ENCODE measurements at regions of chr6 and their contacts with region 1.

Region 1: GRCh38 chr6:118800394-118801071 is 93.4 kb upstream of the ASF1A start:
- DNase-seq: peak; percentile 87
- H3K4me3 Mint-ChIP-seq: peak overlapping the region; percentile 14
- H3K27ac Mint-ChIP-seq: peak overlapping the region; percentile 77
- H3K4me1 Mint-ChIP-seq: peaks cover 44% of the 10 kb centered on the region
- H3K27me3 Mint-ChIP-seq: no peaks in the 10 kb centered on the region

Region 2: DNA sequence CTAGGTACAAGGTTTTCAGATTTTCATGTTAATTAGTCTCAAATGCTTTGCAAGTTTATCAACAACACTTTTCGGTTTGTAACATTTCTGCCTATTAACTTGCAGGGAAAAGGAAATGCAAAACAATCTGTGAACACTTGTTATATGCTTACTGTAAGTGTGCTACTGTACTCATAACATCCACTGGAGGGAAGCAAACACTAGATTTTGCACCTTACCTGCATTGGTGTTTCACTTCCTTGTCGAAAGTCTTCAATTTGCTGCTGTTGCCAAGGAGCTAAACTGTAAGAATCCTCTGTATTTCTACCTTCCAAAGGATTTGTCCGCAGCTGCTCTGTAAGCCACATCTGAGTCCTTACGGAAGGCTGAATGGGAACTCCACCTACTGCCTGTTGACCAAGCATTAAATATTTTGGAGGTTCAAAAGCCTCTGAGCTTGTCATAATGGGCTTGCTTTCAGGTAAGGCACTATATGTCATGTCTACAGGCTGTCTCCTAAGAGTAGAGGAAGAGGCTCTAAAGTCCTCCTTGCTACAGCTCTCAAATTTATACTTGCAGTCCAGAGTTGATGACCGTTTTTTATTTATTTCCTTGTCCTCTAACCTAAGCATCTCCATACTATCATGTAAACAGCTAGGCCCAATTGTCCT is 235.1 kb before region 1 on chr6:
- CTCF ChIA-PET with region 1: interaction called, 22 read pairs
- POLR2A ChIA-PET with region 1: interaction called, 4 read pairs
- DNase-seq: no peak
- H3K4me3 Mint-ChIP-seq: no peak overlapping the region
- H3K27ac Mint-ChIP-seq: peak overlapping the region; percentile 22
- H3K4me1 Mint-ChIP-seq: peaks cover 11% of the 10 kb centered on the region
- H3K27me3 Mint-ChIP-seq: no peaks in the 10 kb centered on the region

Region 3: GRCh38 chr6:118651282-118652050 is 149.1 kb before region 1 on chr6 and contains the start of gene CEP85L:
- CTCF ChIA-PET with region 1: interaction called, 5 read pairs
- POLR2A ChIA-PET with region 1: interaction called, 10 read pairs
- DNase-seq: peak; percentile 90
- H3K4me3 Mint-ChIP-seq: peak within 1 kb of the TSS; percentile 82
- H3K27ac Mint-ChIP-seq: peak within 1 kb of the TSS; percentile 75
- H3K4me1 Mint-ChIP-seq: peaks cover 34% of the 10 kb centered on the region
- H3K27me3 Mint-ChIP-seq: no peaks in the 10 kb centered on the region
- total RNA-seq, gene CEP85L: 36.2 to 38.0 TPM

Region 4: GRCh38 chr6:118787724-118788423 is 12.7 kb before region 1 on chr6:
- CTCF ChIA-PET with region 1: interaction called, 9 read pairs
- POLR2A ChIA-PET with region 1: interaction called, 11 read pairs
- DNase-seq: peak; percentile 37
- H3K4me3 Mint-ChIP-seq: no peak overlapping the region
- H3K27ac Mint-ChIP-seq: peak overlapping the region; percentile 58
- H3K4me1 Mint-ChIP-seq: peaks cover 21% of the 10 kb centered on the region
- H3K27me3 Mint-ChIP-seq: no peaks in the 10 kb centered on the region

Region 5: GRCh38 chr6:118869350-118869749 is 68.8 kb after region 1 on chr6:
- CTCF ChIA-PET with region 1: no interaction called
- POLR2A ChIA-PET with region 1: no interaction called
- DNase-seq: no peak
- H3K4me3 Mint-ChIP-seq: no peak overlapping the region
- H3K27ac Mint-ChIP-seq: no peak overlapping the region
- H3K4me1 Mint-ChIP-seq: peaks cover 27% of the 10 kb centered on the region
- H3K27me3 Mint-ChIP-seq: no peaks in the 10 kb centered on the region